Heart right ventricle (tissue), 16 donors: ENCODE measurements at regions of chr5 and their contacts with region 1.

Region 1: GRCh38 chr5:88785391-88786219 is 97.4 kb downstream of the MEF2C start:
- DNase-seq: peak in 1 of 2 donors; percentile 80
- ATAC-seq: peak; percentile 90 to 96 (median 94)
- H3K4me3 ChIP-seq: peak overlapping the region in 6 of 10 donors; percentile 3 to 26 (median 16)
- H3K27ac ChIP-seq: peak overlapping the region; percentile 14 to 91 (median 80)
- H3K4me1 ChIP-seq: peaks cover 0 to 78% (median 48%) of the 10 kb centered on the region in 9 donors
- H3K27me3 ChIP-seq: no peaks in the 10 kb centered on the region
- CTCF ChIP-seq: no peak

Region 2: DNA sequence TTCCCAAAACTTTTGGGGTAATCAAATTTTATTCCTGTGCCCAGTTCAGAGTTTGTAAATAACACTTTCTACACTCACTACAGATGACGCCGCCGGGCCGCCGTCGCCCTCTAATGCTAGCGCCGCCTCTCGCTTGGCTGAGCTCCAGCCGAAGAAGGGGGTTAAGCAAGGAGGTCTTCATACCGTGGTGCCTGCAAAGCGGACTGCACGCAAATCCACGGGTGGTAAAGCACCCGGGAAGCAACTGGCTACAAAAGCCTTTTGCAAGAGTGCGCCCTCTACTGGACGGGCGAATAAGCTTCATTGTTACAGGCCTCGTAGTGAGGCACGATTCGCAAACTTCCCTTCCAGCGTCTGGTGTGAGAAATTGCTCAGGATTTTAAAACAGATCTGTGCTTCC is 183.0 kb before region 1 on chr5:
- intact Hi-C with region 1: no loop called
- DNase-seq: no peak
- ATAC-seq: no peak
- H3K4me3 ChIP-seq: no peak overlapping the region
- H3K27ac ChIP-seq: no peak overlapping the region
- H3K4me1 ChIP-seq: no peaks in the 10 kb centered on the region
- H3K27me3 ChIP-seq: peaks cover 0 to 2% (median 0%) of the 10 kb centered on the region in 7 donors
- CTCF ChIP-seq: peak in 3 of 9 donors; percentile 14 to 34 (median 31)

Region 3: DNA sequence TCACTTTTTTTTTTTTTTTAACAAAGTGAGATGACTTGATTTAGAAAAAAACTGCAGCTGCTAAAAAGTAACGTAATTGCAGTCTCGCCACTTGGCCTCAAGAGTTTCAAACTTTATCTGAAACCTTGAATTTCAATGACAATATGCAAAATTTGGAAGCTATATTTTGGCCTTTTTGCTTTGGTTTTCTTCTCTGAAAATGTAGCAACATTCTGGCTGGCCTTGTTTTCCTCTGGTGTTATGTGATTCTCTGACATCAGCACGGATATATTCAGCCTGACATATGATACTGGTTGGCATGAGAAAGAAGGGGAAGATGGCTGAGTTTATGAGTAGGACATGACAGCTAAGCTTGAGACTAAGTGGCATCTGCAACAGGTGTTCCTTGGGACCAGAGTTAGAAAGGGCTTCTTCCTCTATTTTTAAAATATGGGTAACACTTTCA is 39.1 kb before region 1 on chr5:
- intact Hi-C with region 1: loop called in 1 of 10 experiments (anchors 5 kb)
- DNase-seq: no peak
- ATAC-seq: peak in 2 of 8 donors; percentile 46 to 50
- H3K4me3 ChIP-seq: no peak overlapping the region
- H3K27ac ChIP-seq: peak overlapping the region in 1 of 10 donors; percentile 29
- H3K4me1 ChIP-seq: peaks cover 0 to 38% (median 18%) of the 10 kb centered on the region in 9 donors
- H3K27me3 ChIP-seq: no peaks in the 10 kb centered on the region
- CTCF ChIP-seq: no peak

Region 4: GRCh38 chr5:88813805-88814575 is 28.4 kb after region 1 on chr5:
- intact Hi-C with region 1: loop called in 2 of 10 experiments (anchors 2 to 5 kb)
- DNase-seq: no peak
- ATAC-seq: peak in 6 of 8 donors; percentile 34 to 55 (median 47)
- H3K4me3 ChIP-seq: no peak overlapping the region
- H3K27ac ChIP-seq: peak overlapping the region in 9 of 10 donors; percentile 4 to 77 (median 61)
- H3K4me1 ChIP-seq: peaks cover 0 to 95% (median 62%) of the 10 kb centered on the region in 9 donors
- H3K27me3 ChIP-seq: no peaks in the 10 kb centered on the region
- CTCF ChIP-seq: no peak

Region 5: DNA sequence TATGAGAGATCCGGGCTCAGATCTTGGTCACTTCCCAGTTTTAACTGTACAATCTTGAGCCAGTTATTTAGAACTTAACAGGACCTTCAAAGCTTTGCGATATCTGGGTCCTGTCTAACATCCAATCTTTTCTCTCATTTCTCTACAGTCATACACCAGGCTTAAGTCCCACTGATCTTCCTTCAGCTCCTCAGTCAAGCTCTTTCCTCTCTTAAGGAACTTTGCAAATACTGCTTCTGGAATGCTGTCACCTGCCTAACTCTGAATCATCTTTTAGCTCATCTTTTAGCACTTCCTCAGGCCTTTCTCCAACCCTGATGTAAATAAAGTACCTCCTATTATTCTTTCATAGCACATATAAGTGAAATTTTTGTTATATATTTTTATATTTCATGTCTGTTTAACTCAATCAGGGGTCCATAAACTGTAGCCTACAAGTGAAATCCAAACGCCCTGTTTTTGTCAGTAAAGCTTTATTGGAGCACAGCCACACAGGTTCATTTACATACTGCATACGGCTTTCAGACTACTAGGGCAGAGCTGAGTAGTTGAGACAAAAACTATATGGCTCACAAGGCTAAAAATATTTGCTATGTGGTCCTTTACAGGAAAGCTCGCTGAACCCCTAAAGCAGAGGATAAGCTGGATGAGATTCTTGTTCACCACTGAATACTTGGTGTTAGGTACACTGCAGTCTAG is 33.8 kb after region 1 on chr5:
- intact Hi-C with region 1: loop called in 2 of 10 experiments (anchors 2 to 5 kb)
- DNase-seq: no peak
- ATAC-seq: no peak
- H3K4me3 ChIP-seq: no peak overlapping the region
- H3K27ac ChIP-seq: peak overlapping the region in 5 of 10 donors; percentile 2 to 42 (median 9)
- H3K4me1 ChIP-seq: peaks cover 0 to 99% (median 67%) of the 10 kb centered on the region in 9 donors
- H3K27me3 ChIP-seq: no peaks in the 10 kb centered on the region
- CTCF ChIP-seq: no peak

Region 6: DNA sequence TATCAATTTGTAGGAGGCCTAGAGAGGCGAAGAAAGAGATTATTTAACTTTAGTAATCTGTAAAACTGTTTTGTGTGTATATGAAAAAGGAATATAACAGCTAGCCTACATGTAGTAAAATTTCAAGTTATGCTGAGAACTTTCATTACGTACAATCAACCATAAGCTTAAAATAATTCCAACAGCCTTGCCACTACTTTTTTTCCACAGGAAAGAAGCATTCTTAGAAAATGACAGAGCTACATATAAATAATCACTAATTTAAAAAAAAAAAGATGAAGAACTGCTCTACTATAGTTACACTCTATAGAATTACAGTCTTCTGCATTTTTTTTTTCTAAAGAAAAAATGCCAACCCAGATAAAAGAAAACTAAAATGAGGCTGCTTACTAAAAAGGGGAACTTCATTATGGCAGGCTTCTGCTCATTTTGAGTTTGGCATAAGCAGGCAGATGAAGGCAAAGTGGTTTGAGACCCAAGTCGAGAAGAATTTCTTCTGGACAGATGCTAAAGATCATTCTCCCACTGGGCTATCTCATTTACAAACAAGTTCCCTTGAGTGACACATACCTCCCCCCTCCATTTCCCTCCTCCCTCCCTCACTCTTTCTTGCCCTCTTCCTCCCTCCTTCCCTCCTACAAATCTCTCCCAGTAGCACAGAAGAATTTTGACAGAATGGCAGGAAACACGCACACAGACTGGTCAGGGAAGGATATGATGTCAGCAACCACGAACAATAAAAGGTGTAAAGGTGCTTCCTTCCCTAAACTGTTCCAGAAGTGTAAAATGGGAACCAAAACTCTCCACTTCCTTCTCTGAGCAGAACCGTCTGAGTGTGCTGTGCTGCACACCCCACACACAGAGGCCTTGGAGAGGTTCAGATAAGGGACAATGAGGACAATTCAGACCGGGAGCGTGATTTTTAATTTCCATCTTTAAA is 41.3 kb after region 1 on chr5:
- intact Hi-C with region 1: loop called in 5 of 10 experiments (anchors 5 kb)
- DNase-seq: peak; percentile 20 to 84
- ATAC-seq: peak; percentile 83 to 93 (median 89)
- H3K4me3 ChIP-seq: peak overlapping the region in 7 of 10 donors; percentile 0 to 37 (median 27)
- H3K27ac ChIP-seq: peak overlapping the region; percentile 45 to 92 (median 80)
- H3K4me1 ChIP-seq: peaks cover 4 to 99% (median 91%) of the 10 kb centered on the region in 9 donors
- H3K27me3 ChIP-seq: no peaks in the 10 kb centered on the region
- CTCF ChIP-seq: no peak

Region 7: GRCh38 chr5:88833371-88834130 is 47.9 kb after region 1 on chr5:
- intact Hi-C with region 1: loop called in 5 of 10 experiments (anchors 5 kb)
- DNase-seq: peak in 1 of 2 donors; percentile 81
- ATAC-seq: peak; percentile 71 to 89 (median 83)
- H3K4me3 ChIP-seq: peak overlapping the region in 8 of 10 donors; percentile 10 to 41 (median 32)
- H3K27ac ChIP-seq: peak overlapping the region; percentile 37 to 92 (median 77)
- H3K4me1 ChIP-seq: peaks cover 4 to 100% (median 87%) of the 10 kb centered on the region in 9 donors
- H3K27me3 ChIP-seq: no peaks in the 10 kb centered on the region
- CTCF ChIP-seq: peak in 2 of 9 donors; percentile 25 to 30

Region 8: DNA sequence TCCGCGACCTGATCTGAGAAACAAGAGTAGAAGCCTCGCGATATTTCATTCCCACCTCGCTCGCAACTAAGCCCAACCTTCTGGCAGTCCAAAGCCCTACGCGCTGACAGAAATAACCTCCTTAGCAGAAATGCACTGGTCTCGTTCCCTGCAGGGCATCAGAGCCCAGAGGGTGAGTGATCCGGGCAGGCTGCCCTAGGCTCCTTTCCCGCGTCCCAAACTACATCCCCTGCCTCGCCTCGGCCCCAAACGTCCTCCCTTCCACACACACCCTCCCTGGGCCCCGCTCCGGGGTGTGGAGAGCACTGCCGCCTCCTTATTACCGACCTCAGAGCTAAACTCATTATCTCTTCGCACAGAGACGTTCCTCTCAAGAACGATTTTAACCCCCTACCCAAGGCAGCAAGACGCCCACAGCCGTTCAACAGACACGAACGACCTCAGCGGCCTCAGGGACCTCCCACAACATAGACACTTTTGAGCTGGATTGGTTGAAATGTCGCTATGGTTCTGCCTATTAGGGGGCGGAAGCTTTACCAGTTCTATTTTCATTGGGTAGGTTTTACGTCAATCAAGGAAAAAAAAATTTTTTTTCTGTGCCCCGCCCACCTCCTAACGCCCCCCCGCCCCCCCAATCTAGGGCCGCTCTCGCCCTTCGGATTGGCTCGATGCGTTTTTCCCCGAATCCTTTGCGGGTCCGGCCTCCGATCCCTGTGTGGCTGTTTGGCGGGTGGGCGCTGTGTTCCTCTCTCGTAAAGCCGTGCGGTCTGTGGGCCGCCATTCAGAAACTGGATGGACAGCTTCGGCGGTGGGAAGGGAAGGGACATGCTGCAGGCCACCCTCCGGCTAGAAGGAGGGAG is 1623.9 kb after region 1 on chr5 and contains the start of gene CETN3:
- intact Hi-C with region 1: loop called in 1 of 10 experiments (anchors 10 kb)
- DNase-seq: peak; percentile 90 to 94
- ATAC-seq: peak; percentile 98 to 99 (median 98)
- H3K4me3 ChIP-seq: peak within 1 kb of the TSS; percentile 63 to 97 (median 82)
- H3K27ac ChIP-seq: peak within 1 kb of the TSS; percentile 88 to 98 (median 96)
- H3K4me1 ChIP-seq: peaks cover 0 to 35% (median 11%) of the 10 kb centered on the region in 9 donors
- H3K27me3 ChIP-seq: no peaks in the 10 kb centered on the region
- CTCF ChIP-seq: peak in 2 of 9 donors; percentile 7 to 25
- total RNA-seq, gene CETN3: 17.2 to 26.6 (median 21.3) TPM